Activated CD4-positive, alpha-beta memory T cell treated with anti-CD3 and anti-CD28 coated beads, Interleukin-2, amount 10 ng/mL, durations not matched to agents 7 days and 5 days (primary cell): ENCODE measurements at regions of chr11 and their contacts with region 1.

Region 1: GRCh38 chr11:6251120-6251733 is 8.4 kb upstream of the CCKBR start:
- DNase-seq: peak; percentile 64
- H3K4me3 Mint-ChIP-seq: no peak overlapping the region
- H3K27ac Mint-ChIP-seq: no peak overlapping the region
- H3K4me1 Mint-ChIP-seq: no peaks in the 10 kb centered on the region
- H3K27me3 Mint-ChIP-seq: peaks cover 4% of the 10 kb centered on the region

Region 2: DNA sequence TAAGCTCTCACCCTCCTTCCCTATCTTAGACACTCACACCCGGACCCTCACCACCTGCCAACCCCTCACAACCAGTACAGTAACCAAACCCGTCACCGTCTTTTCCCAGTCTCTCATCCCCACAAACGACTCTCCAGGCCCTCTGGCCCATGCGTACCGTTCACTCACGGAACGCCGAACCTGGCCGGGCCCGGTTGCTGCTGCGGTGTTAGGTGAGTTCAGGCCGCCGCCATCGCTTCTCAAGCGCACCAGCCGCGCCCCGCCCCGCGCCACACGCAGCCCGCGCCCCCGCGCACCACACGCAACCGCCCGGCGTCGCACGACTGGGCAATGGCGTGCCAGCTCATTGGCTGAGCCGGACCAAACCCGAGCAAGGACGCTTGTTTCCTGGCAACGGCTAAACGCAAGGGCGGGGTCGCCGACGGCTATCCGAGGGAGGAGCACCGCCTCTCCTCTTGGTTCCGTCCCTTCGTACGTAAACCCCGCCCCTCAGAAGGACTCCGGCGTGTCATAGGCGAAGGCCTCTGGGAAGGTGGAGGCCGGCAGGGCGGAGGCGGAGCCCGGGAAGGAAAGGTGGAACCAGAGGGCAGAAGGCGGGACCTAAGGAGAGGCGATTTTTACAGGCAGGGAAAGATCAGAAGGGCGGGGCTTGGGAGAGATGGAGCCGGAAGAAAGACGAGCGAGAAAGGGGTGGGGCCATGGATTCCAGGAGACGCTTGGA is 16.7 kb before region 1 on chr11 and contains the start of gene FHIP1B:
- CTCF ChIA-PET with region 1: interaction called, 23 read pairs
- POLR2A ChIA-PET with region 1: no interaction called
- DNase-seq: peak; percentile 100
- H3K4me3 Mint-ChIP-seq: peak within 1 kb of the TSS; percentile 99
- H3K27ac Mint-ChIP-seq: peak within 1 kb of the TSS; percentile 84
- H3K4me1 Mint-ChIP-seq: peaks cover 42% of the 10 kb centered on the region
- H3K27me3 Mint-ChIP-seq: no peaks in the 10 kb centered on the region
- total RNA-seq, gene FHIP1B: 19.1 to 19.2 TPM

Region 3: GRCh38 chr11:6353367-6353987 is 102.2 kb after region 1 on chr11:
- CTCF ChIA-PET with region 1: interaction called, 117 read pairs
- POLR2A ChIA-PET with region 1: no interaction called
- DNase-seq: peak; percentile 62
- H3K4me3 Mint-ChIP-seq: no peak overlapping the region
- H3K27ac Mint-ChIP-seq: no peak overlapping the region
- H3K4me1 Mint-ChIP-seq: peaks cover 19% of the 10 kb centered on the region
- H3K27me3 Mint-ChIP-seq: no peaks in the 10 kb centered on the region

Region 4: DNA sequence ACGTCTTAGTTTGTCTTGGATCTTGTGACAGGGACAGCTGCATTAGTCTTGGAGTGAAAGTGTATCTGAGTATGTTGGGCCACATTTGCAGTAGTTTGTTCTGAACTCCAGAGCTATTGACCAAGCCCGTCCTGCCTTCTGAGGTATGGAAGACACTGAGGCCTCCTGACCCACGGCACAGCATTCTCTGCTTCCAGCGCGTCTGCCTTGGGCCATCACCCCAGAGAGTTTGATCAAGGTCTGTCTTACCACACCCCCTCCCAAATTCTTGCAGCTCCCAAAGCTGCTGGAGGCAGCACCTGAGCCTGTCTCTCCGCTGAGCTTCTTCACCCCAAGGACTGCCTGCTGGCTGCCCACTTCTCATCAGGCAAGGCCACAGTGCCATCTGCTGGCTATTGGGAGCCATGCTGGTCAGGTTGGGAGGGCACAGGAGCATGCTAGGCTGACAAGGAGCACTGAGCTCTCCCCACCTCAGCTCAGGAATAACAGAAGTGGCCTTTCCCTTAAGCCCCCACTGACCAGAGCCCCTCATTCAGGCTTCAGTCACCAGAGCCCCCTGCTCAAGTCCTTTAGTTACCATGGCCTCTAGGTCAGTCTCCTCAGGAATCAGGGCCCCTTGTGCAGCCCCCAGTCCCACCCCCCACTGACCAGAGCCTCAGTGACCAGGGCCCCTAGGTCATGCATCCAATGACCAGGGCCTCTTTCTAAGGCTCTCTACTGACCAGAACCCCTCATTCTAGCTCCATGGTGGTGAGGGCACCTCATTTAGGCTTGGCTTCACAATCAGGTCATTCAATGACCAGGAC is 111.8 kb after region 1 on chr11:
- CTCF ChIA-PET with region 1: interaction called, 64 read pairs
- POLR2A ChIA-PET with region 1: interaction called, 3 read pairs
- DNase-seq: peak; percentile 78
- H3K4me3 Mint-ChIP-seq: no peak overlapping the region
- H3K27ac Mint-ChIP-seq: no peak overlapping the region
- H3K4me1 Mint-ChIP-seq: no peaks in the 10 kb centered on the region
- H3K27me3 Mint-ChIP-seq: no peaks in the 10 kb centered on the region